ENCODE measurements at regions of chr14 and their contacts with region 1.

Region 1: GRCh38 chr14:23320774-23321571 is at the start of gene PABPN1:
- DNase-seq: peak; percentile 99
- ATAC-seq: peak; percentile 95
- H3K4me3 ChIP-seq: peak within 1 kb of the TSS; percentile 99
- H3K27ac ChIP-seq: peak within 1 kb of the TSS; percentile 87
- H3K4me1 ChIP-seq: peaks cover 13% of the 10 kb centered on the region
- H3K27me3 ChIP-seq: no peaks in the 10 kb centered on the region
- CTCF ChIP-seq: no peak
- EP300 ChIP-seq: peak in 1 of 2 experiments; percentile 58; a peak in 1 of 4 replicates
- POLR2A ChIP-seq: peak; percentile 86
- RAD21 ChIP-seq: no peak
- polyA plus RNA-seq, gene PABPN1: 31.3 to 35.6 TPM

Region 2: DNA sequence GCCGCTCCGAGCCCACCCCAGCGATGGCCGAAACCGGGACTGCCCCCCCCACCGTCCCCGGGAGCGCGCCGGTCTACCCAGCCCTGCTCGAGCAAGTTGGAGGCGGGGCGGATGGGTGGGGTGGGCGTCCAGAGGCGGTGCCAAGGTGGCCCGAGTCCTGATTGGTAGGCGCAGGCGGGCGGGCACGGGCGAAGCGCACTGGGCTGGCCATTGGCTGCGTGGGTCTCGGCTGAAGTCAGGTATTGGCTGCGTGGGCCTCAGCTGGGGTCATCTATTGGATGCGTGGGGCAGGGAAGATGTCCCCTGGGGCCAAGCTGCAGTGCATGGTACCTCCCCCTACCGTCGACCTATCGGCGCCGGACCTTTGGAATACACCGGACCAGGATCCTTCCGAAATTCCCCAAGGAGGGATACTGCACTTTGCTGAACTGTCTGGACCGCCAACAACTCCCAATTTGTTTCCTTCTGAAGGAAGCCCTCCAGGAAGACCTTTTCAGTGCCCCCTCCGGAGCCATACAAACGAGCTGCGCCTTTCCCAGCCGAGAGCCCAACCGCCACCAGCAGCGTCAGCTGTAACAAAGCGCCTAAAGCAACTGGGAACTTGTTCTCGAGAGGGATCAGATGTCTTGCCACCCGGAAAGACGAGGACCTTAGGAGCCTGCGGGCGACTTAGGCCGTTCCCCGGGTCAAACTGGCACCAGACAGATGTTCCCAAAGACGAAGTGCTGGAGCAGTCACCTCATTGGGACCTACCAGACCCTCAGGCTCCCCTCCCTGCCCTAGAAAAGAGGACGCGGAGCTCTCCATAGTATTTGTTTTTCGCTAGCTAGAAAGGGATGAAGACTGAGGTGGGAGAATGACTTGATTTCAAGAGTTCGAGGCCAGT is 34.7 kb before region 1 on chr14 and contains the start of gene HOMEZ:
- CTCF ChIA-PET with region 1: interaction called, 20 read pairs
- POLR2A ChIA-PET with region 1: interaction called, 40 read pairs
- RAD21 ChIA-PET with region 1: interaction called, 26 read pairs
- SMC1A ChIA-PET with region 1: interaction called, 6 read pairs
- in situ Hi-C with region 1: no loop called
- intact Hi-C with region 1: no loop called
- DNase-seq: peak; percentile 95
- ATAC-seq: peak; percentile 99
- H3K4me3 ChIP-seq: peak within 1 kb of the TSS; percentile 84
- H3K27ac ChIP-seq: peak within 1 kb of the TSS; percentile 85
- H3K4me1 ChIP-seq: peaks cover 6% of the 10 kb centered on the region; the same call in 1 of the 2 replicates
- H3K27me3 ChIP-seq: no peaks in the 10 kb centered on the region
- CTCF ChIP-seq: no peak
- EP300 ChIP-seq: no peak
- POLR2A ChIP-seq: peak; percentile 71
- RAD21 ChIP-seq: no peak
- polyA plus RNA-seq, gene HOMEZ: 2.6 to 3.6 TPM

Region 3: DNA sequence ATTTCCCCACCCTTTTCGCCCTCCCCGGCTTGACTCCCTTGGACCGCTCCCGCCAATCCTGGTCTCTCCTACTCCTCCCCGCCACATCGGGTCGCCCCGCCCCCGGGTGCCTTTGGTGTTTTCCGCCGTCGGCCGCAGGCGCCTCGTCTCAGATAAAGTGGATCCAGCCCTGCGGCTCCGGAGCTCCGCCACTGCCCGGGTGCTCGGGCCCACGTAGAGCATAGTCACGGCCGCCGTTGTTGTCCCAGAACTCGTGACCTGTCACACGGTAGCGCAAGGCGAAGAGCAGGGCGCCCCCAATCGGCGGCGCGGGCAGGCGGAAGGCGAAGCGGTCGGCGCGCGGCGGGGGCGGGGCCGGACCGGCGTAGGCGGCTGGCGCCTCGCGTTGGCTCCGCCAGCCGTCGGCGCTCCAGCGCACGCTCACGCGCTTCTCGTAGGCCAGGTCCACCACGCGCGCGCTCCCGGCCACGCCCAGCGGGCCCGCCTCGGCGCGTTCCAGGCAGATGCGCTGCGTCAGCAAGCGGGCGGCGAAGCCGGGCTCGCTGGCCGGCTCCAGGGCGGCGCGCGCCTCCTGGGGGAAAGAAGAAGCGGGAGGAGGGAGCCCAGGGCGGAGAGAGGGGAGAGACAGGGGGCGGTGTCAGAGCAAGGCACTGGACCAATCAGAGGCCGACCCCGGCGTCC is 19.5 kb before region 1 on chr14:
- CTCF ChIA-PET with region 1: interaction called, 77 read pairs
- POLR2A ChIA-PET with region 1: interaction called, 98 read pairs
- RAD21 ChIA-PET with region 1: interaction called, 103 read pairs
- SMC1A ChIA-PET with region 1: interaction called, 48 read pairs
- in situ Hi-C with region 1: no loop called
- intact Hi-C with region 1: loop called (anchors 1 kb)
- DNase-seq: peak; percentile 91
- ATAC-seq: peak; percentile 90
- H3K4me3 ChIP-seq: peak overlapping the region; percentile 73
- H3K27ac ChIP-seq: peak overlapping the region; percentile 85
- H3K4me1 ChIP-seq: peaks cover 11% of the 10 kb centered on the region
- H3K27me3 ChIP-seq: no peaks in the 10 kb centered on the region
- CTCF ChIP-seq: peak; percentile 72 to 88 (median 73)
- EP300 ChIP-seq: peak; percentile 39; a peak in 1 of 4 replicates
- POLR2A ChIP-seq: peak; percentile 78
- RAD21 ChIP-seq: peak; percentile 43; the same call in 1 of the 2 replicates

Region 4: GRCh38 chr14:23362200-23362599 is 41.2 kb after region 1 on chr14:
- CTCF ChIA-PET with region 1: no interaction called
- POLR2A ChIA-PET with region 1: no interaction called
- RAD21 ChIA-PET with region 1: no interaction called
- SMC1A ChIA-PET with region 1: no interaction called
- in situ Hi-C with region 1: no loop called
- intact Hi-C with region 1: no loop called
- DNase-seq: no peak
- ATAC-seq: no peak
- H3K4me3 ChIP-seq: no peak overlapping the region
- H3K27ac ChIP-seq: no peak overlapping the region
- H3K4me1 ChIP-seq: no peaks in the 10 kb centered on the region
- H3K27me3 ChIP-seq: peaks cover 0 to 6% of the 10 kb centered on the region in 2 experiments; a peak in 3 of 4 replicates
- CTCF ChIP-seq: peak in 1 of 3 experiments; percentile 9; a peak in 1 of 6 replicates
- EP300 ChIP-seq: no peak
- POLR2A ChIP-seq: no peak
- RAD21 ChIP-seq: no peak

Region 5: DNA sequence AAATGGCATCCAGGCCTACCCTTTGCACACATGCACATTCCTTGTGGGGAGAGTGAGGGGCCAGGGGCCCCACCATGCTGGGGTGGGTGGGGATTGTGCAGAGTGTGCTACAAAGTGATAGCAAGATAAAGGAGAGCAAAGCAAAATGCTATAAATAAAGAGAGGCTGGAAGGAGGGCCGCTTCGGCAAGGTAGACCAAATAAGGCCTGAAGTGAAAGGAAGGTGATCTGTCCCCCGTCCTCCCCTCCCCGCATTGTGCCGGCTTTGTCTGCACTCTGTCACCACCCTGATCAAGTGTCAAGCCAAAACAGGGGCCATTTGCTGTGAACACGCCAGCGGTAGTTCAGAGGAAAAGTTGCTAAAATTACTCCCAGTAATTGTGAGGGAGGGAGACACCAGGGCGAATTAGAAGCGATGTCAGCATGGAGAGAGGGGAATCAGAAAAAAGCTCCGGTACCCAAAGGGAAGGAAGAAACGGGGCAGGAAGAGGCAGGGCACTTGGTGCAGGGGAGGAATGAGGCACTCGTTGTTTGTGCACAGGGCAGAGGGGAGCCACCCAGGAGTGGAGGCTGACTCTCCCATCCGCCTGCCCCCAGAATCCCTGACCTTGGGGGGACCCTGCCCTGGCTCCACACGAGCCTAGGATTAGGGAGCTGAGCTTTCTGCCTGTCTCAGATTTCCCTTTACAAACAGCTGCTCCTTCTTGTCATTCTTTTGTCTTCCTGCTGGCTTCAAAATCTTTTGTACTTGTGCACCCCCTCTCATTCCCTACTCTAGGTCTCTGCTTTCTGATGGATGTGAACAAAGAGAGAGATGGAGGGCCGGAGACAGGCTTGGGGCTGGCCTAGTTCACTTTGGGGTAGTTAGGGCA is 117.4 kb after region 1 on chr14:
- CTCF ChIA-PET with region 1: no interaction called
- POLR2A ChIA-PET with region 1: no interaction called
- RAD21 ChIA-PET with region 1: no interaction called
- SMC1A ChIA-PET with region 1: no interaction called
- in situ Hi-C with region 1: no loop called
- intact Hi-C with region 1: no loop called
- DNase-seq: no peak
- ATAC-seq: no peak
- H3K4me3 ChIP-seq: no peak overlapping the region
- H3K27ac ChIP-seq: no peak overlapping the region
- H3K4me1 ChIP-seq: no peaks in the 10 kb centered on the region
- H3K27me3 ChIP-seq: no peaks in the 10 kb centered on the region; a peak in 2 of 4 replicates
- CTCF ChIP-seq: no peak
- EP300 ChIP-seq: no peak
- POLR2A ChIP-seq: no peak
- RAD21 ChIP-seq: no peak

Region 6: GRCh38 chr14:23469127-23469905 is 148.3 kb after region 1 on chr14 and contains the start of gene NGDN:
- CTCF ChIA-PET with region 1: interaction called, 10 read pairs
- POLR2A ChIA-PET with region 1: no interaction called
- RAD21 ChIA-PET with region 1: interaction called, 5 read pairs
- SMC1A ChIA-PET with region 1: interaction called, 4 read pairs
- in situ Hi-C with region 1: no loop called
- intact Hi-C with region 1: loop called (anchors 5 kb)
- DNase-seq: peak; percentile 100
- ATAC-seq: peak; percentile 99
- H3K4me3 ChIP-seq: peak within 1 kb of the TSS; percentile 88
- H3K27ac ChIP-seq: peak within 1 kb of the TSS; percentile 72
- H3K4me1 ChIP-seq: peaks cover 8% of the 10 kb centered on the region
- H3K27me3 ChIP-seq: no peaks in the 10 kb centered on the region
- CTCF ChIP-seq: peak; percentile 54 to 82 (median 73)
- EP300 ChIP-seq: no peak
- POLR2A ChIP-seq: peak; percentile 84
- RAD21 ChIP-seq: peak; percentile 13; the same call in 1 of the 2 replicates
- polyA plus RNA-seq, gene NGDN: 146 to 163 TPM

Measured in GM12878 (cell line).